Activated CD8-positive, alpha-beta T cell treated with anti-CD3 and anti-CD28 coated beads, Interleukin-2, amount 10 ng/mL, durations not matched to agents 7 days and 5 days (primary cell): ENCODE measurements at regions of chr5 and their contacts with region 1.

Region 1: GRCh38 chr5:130871346-130872086 is 293.5 kb downstream of the HINT1 start:
- DNase-seq: peak; percentile 57
- ATAC-seq: peak; percentile 39
- H3K4me3 Mint-ChIP-seq: no peak overlapping the region
- H3K27ac Mint-ChIP-seq: no peak overlapping the region
- H3K4me1 Mint-ChIP-seq: no peaks in the 10 kb centered on the region
- H3K27me3 Mint-ChIP-seq: no peaks in the 10 kb centered on the region

Region 2: GRCh38 chr5:130528474-130528873 is 343.0 kb before region 1 on chr5:
- CTCF ChIA-PET with region 1: no interaction called
- POLR2A ChIA-PET with region 1: no interaction called
- DNase-seq: no peak
- ATAC-seq: no peak
- H3K4me3 Mint-ChIP-seq: no peak overlapping the region
- H3K27ac Mint-ChIP-seq: no peak overlapping the region
- H3K4me1 Mint-ChIP-seq: no peaks in the 10 kb centered on the region
- H3K27me3 Mint-ChIP-seq: no peaks in the 10 kb centered on the region

Region 3: DNA sequence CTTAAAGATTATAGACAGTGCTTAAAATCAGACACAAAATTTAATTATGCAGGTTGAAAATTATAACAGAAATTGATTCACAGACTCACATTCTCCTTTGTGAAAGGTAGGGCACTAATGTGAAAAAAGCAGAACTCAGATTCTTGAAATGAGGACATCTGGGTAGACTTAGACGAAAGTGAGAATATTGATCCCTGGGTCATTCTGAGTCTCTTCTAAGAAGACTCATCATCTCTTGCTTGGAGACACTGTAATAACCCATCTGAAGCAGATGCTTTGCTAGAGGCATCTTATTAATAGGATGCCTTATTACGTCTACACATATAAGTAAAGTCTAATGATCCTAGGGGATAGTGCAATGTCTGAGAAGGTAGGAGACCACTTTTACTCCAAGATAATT is 19.1 kb after region 1 on chr5:
- CTCF ChIA-PET with region 1: no interaction called
- POLR2A ChIA-PET with region 1: no interaction called
- DNase-seq: no peak
- ATAC-seq: no peak
- H3K4me3 Mint-ChIP-seq: no peak overlapping the region
- H3K27ac Mint-ChIP-seq: no peak overlapping the region
- H3K4me1 Mint-ChIP-seq: peaks cover 3% of the 10 kb centered on the region
- H3K27me3 Mint-ChIP-seq: peaks cover 17% of the 10 kb centered on the region

Region 4: GRCh38 chr5:131068893-131069643 is 197.6 kb after region 1 on chr5:
- CTCF ChIA-PET with region 1: interaction called, 18 read pairs
- POLR2A ChIA-PET with region 1: no interaction called
- DNase-seq: peak; percentile 86
- ATAC-seq: peak; percentile 98
- H3K4me3 Mint-ChIP-seq: peak overlapping the region; percentile 50
- H3K27ac Mint-ChIP-seq: peak overlapping the region; percentile 89
- H3K4me1 Mint-ChIP-seq: peaks cover 59% of the 10 kb centered on the region
- H3K27me3 Mint-ChIP-seq: no peaks in the 10 kb centered on the region

Region 5: GRCh38 chr5:131109540-131110255 is 238.2 kb after region 1 on chr5:
- CTCF ChIA-PET with region 1: interaction called, 15 read pairs
- POLR2A ChIA-PET with region 1: no interaction called
- DNase-seq: peak; percentile 46
- ATAC-seq: no peak
- H3K4me3 Mint-ChIP-seq: no peak overlapping the region
- H3K27ac Mint-ChIP-seq: no peak overlapping the region
- H3K4me1 Mint-ChIP-seq: peaks cover 1% of the 10 kb centered on the region
- H3K27me3 Mint-ChIP-seq: no peaks in the 10 kb centered on the region